CD14-positive monocyte (primary cell): ENCODE measurements at regions of chr10 and their contacts with region 1.

Region 1: GRCh38 chr10:72552857-72553256 is 73.0 kb downstream of the MICU1 start:
- DNase-seq: peak; percentile 54 to 86 (median 65)
- H3K4me3 ChIP-seq: no peak overlapping the region
- H3K4me3 Mint-ChIP-seq: no peak overlapping the region
- H3K27ac ChIP-seq: peak overlapping the region; percentile 65 to 72
- H3K27ac Mint-ChIP-seq: peak overlapping the region; percentile 73 to 89 (median 87)
- H3K4me1 ChIP-seq: peaks cover 12 to 16% of the 10 kb centered on the region in 2 donors
- H3K4me1 Mint-ChIP-seq: peaks cover 25% of the 10 kb centered on the region
- H3K27me3 ChIP-seq: no peaks in the 10 kb centered on the region
- H3K27me3 Mint-ChIP-seq: no peaks in the 10 kb centered on the region
- CTCF ChIP-seq: no peak

Region 2: DNA sequence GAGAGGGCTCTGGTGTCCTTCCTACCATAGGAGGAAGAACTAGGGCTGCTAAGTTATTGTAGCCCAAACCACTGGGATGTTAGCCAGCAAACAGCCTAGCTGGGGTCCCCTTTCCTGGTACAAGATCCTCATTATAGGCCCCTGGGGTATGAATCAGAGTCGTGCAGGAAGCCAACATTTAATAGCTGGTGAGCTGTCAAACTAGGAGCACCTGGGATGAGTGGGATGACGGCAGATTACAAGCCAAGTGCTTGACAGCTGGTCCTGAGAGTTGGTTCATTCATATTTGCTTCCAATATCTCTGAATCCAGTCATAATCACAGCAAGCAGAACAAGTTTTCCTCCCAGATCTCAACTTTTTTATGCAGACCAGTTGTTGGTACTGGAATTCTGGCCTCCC is 173.1 kb before region 1 on chr10:
- intact Hi-C with region 1: loop called in 1 of 2 experiments (anchors 10 kb)
- DNase-seq: no peak
- H3K4me3 ChIP-seq: no peak overlapping the region
- H3K4me3 Mint-ChIP-seq: no peak overlapping the region
- H3K27ac ChIP-seq: no peak overlapping the region
- H3K27ac Mint-ChIP-seq: peak overlapping the region in 1 of 7 donors; percentile 72
- H3K4me1 ChIP-seq: peaks cover 1 to 5% of the 10 kb centered on the region in 2 donors
- H3K4me1 Mint-ChIP-seq: peaks cover 17% of the 10 kb centered on the region
- H3K27me3 ChIP-seq: no peaks in the 10 kb centered on the region
- H3K27me3 Mint-ChIP-seq: no peaks in the 10 kb centered on the region
- CTCF ChIP-seq: no peak

Region 3: DNA sequence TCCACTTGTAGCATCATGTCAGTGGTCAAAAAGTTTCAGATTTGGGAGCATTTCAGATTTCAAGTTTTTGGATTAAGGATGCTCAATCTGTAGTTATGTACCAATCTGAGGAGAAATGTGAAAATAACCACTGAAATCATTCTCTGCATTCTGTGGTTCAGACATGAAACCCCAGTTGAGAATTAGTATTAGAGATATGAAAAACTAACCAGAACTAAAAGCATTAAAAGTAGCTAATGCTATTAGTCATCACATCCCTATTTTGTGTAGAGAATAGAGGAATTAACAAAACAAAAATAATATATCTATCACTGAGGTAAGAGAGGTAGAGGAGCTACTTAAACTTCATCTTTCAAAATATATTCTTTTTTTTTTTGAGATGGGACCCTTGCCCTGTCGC is 45.0 kb after region 1 on chr10:
- intact Hi-C with region 1: no loop called
- DNase-seq: peak in 1 of 3 donors; percentile 12
- H3K4me3 ChIP-seq: no peak overlapping the region
- H3K4me3 Mint-ChIP-seq: no peak overlapping the region
- H3K27ac ChIP-seq: peak overlapping the region in 1 of 2 donors; percentile 27
- H3K27ac Mint-ChIP-seq: peak overlapping the region in 1 of 7 donors; percentile 21
- H3K4me1 ChIP-seq: peaks cover 34 to 50% of the 10 kb centered on the region in 2 donors
- H3K4me1 Mint-ChIP-seq: peaks cover 41% of the 10 kb centered on the region
- H3K27me3 ChIP-seq: no peaks in the 10 kb centered on the region
- H3K27me3 Mint-ChIP-seq: peaks cover 0 to 2% (median 0%) of the 10 kb centered on the region in 3 donors
- CTCF ChIP-seq: no peak